Tibial artery (tissue), 4 donors: ENCODE measurements at regions of chr6 and their contacts with region 1.

Region 1: GRCh38 chr6:30244560-30244959 is 31.4 kb upstream of the TRIM26 start:
- DNase-seq: no peak
- H3K4me3 ChIP-seq: no peak overlapping the region
- H3K27ac ChIP-seq: no peak overlapping the region
- H3K4me1 ChIP-seq: no peaks in the 10 kb centered on the region
- H3K27me3 ChIP-seq: no peaks in the 10 kb centered on the region
- CTCF ChIP-seq: no peak

Region 2: GRCh38 chr6:30272017-30272416 is 27.5 kb after region 1 on chr6:
- intact Hi-C with region 1: no loop called
- DNase-seq: no peak
- H3K4me3 ChIP-seq: no peak overlapping the region
- H3K27ac ChIP-seq: no peak overlapping the region
- H3K4me1 ChIP-seq: peaks cover 0 to 4% (median 0%) of the 10 kb centered on the region in 4 donors
- H3K27me3 ChIP-seq: no peaks in the 10 kb centered on the region
- CTCF ChIP-seq: no peak

Region 3: DNA sequence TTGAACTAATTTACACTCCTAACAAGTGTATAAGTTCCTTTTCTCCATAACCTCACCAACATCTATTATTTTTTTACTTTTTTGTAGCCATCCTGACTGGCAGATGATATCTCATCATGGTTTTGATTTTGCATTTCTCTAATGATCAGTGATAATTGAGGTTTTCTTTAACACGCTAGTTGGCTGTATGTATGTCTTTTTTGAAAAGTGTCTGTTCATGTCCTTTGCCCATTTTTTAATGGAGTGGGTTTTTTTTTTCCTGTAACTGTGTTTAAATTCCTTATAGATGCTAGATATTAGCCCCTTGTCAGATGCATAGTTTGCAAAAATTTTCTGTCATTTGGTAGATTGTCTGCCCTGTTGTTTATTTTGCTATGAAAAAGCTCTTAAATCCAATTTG is 42.6 kb after region 1 on chr6:
- intact Hi-C with region 1: loop called (anchors 1 kb)
- DNase-seq: no peak
- H3K4me3 ChIP-seq: no peak overlapping the region
- H3K27ac ChIP-seq: no peak overlapping the region
- H3K4me1 ChIP-seq: no peaks in the 10 kb centered on the region
- H3K27me3 ChIP-seq: no peaks in the 10 kb centered on the region
- CTCF ChIP-seq: no peak